CD14-positive monocyte (primary cell): ENCODE measurements at regions of chr3 and their contacts with region 1.

Region 1: GRCh38 chr3:183884427-183885296 is at the start of gene PARL:
- DNase-seq: peak; percentile 92 to 95 (median 93)
- H3K4me3 ChIP-seq: peak within 1 kb of the TSS; percentile 56 to 92 (median 86)
- H3K4me3 Mint-ChIP-seq: peak within 1 kb of the TSS; percentile 93 to 98
- H3K27ac ChIP-seq: peak within 1 kb of the TSS; percentile 77 to 90
- H3K27ac Mint-ChIP-seq: peak within 1 kb of the TSS; percentile 86 to 96 (median 93)
- H3K4me1 ChIP-seq: peaks cover 36 to 51% of the 10 kb centered on the region in 2 donors
- H3K4me1 Mint-ChIP-seq: peaks cover 41% of the 10 kb centered on the region
- H3K27me3 ChIP-seq: no peaks in the 10 kb centered on the region
- H3K27me3 Mint-ChIP-seq: peaks cover 0 to 4% (median 2%) of the 10 kb centered on the region in 3 donors
- CTCF ChIP-seq: peak; percentile 92
- polyA plus RNA-seq, gene PARL: 65.6 to 196 (median 155) TPM

Region 2: GRCh38 chr3:183460081-183461055 is 424.3 kb before region 1 on chr3:
- intact Hi-C with region 1: loop called in 1 of 2 experiments (anchors 10 kb)
- DNase-seq: no peak
- H3K4me3 ChIP-seq: no peak overlapping the region
- H3K4me3 Mint-ChIP-seq: no peak overlapping the region
- H3K27ac ChIP-seq: no peak overlapping the region
- H3K27ac Mint-ChIP-seq: no peak overlapping the region
- H3K4me1 ChIP-seq: no peaks in the 10 kb centered on the region
- H3K4me1 Mint-ChIP-seq: peaks cover 3% of the 10 kb centered on the region
- H3K27me3 ChIP-seq: no peaks in the 10 kb centered on the region
- H3K27me3 Mint-ChIP-seq: peaks cover 0 to 3% (median 3%) of the 10 kb centered on the region in 3 donors
- CTCF ChIP-seq: no peak

Region 3: DNA sequence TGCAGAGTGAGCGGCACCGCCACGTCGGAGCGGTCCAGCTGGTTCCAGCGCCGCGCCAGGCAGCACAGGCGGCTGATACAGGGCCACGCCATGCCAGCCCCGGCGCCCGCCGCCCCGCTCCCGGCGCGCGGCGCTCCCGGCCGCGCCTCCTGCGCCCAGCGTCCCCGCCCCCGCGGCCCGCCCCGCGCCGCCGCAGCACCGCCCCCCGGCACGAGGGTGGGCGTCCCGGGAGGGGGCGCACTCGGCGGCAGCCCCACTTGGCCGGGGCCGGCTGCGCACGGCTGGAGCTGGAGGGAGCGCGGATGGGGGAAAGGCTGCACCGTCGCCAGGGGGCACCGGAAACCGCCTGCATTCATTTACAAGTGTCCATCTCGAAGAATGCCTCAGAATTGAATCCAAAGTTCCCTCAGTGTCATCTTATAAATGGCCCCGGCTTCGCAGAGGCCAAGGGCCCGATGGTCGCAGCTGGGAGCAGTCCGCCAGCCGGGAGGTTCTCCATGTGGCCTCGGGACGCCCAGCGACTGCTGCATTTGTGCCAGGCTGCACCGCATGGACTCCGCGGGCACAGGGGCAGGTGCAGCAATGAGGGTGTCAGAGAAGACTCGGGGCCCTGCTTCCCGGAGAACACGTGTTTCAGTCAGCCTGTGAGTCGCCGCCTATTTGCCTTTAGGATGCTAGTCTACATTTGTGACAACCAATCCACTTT is 59.1 kb before region 1 on chr3 and contains the start of gene MAP6D1:
- intact Hi-C with region 1: loop called in 1 of 2 experiments (anchors 5 kb)
- DNase-seq: peak; percentile 12 to 37 (median 25)
- H3K4me3 ChIP-seq: peak within 1 kb of the TSS; percentile 31 to 76 (median 42)
- H3K4me3 Mint-ChIP-seq: peak within 1 kb of the TSS; percentile 81 to 90
- H3K27ac ChIP-seq: no peak within 1 kb of the TSS
- H3K27ac Mint-ChIP-seq: no peak within 1 kb of the TSS
- H3K4me1 ChIP-seq: peaks cover 15 to 21% of the 10 kb centered on the region in 2 donors
- H3K4me1 Mint-ChIP-seq: peaks cover 16% of the 10 kb centered on the region
- H3K27me3 ChIP-seq: peaks cover 0 to 5% of the 10 kb centered on the region in 2 donors
- H3K27me3 Mint-ChIP-seq: peaks cover 5 to 18% (median 8%) of the 10 kb centered on the region in 3 donors
- CTCF ChIP-seq: peak; percentile 35
- polyA plus RNA-seq, gene MAP6D1: 0.18 to 0.35 TPM in 2 of 3 donors, not detected in the other